ENCODE measurements at regions of chr14 and their contacts with region 1.

Region 1: GRCh38 chr14:83883732-83884131 is 1646.2 kb upstream of the FLRT2 start:
- DNase-seq: no peak
- H3K4me3 ChIP-seq: no peak overlapping the region
- H3K27ac ChIP-seq: no peak overlapping the region
- H3K4me1 ChIP-seq: no peaks in the 10 kb centered on the region
- H3K27me3 ChIP-seq: no peaks in the 10 kb centered on the region
- CTCF ChIP-seq: no peak
- EP300 ChIP-seq: no peak
- POLR2A ChIP-seq: no peak

Region 2: GRCh38 chr14:85308531-85309300 is 1425.0 kb after region 1 on chr14:
- in situ Hi-C with region 1: no loop called
- intact Hi-C with region 1: loop called (anchors 5 kb)
- DNase-seq: no peak
- H3K4me3 ChIP-seq: no peak overlapping the region
- H3K27ac ChIP-seq: no peak overlapping the region
- H3K4me1 ChIP-seq: no peaks in the 10 kb centered on the region
- H3K27me3 ChIP-seq: no peaks in the 10 kb centered on the region
- CTCF ChIP-seq: no peak
- EP300 ChIP-seq: no peak
- POLR2A ChIP-seq: no peak

Measured in transverse colon (tissue), 4 donors.